Dendritic cell treated with granulocyte-macrophage colony-stimulating factor and Interleukin-4, amounts not matched to agents 40 ng/mL and 50 ng/mL, for 4 days (primary cell): ENCODE measurements at regions of chr17 and their contacts with region 1.

Region 1: DNA sequence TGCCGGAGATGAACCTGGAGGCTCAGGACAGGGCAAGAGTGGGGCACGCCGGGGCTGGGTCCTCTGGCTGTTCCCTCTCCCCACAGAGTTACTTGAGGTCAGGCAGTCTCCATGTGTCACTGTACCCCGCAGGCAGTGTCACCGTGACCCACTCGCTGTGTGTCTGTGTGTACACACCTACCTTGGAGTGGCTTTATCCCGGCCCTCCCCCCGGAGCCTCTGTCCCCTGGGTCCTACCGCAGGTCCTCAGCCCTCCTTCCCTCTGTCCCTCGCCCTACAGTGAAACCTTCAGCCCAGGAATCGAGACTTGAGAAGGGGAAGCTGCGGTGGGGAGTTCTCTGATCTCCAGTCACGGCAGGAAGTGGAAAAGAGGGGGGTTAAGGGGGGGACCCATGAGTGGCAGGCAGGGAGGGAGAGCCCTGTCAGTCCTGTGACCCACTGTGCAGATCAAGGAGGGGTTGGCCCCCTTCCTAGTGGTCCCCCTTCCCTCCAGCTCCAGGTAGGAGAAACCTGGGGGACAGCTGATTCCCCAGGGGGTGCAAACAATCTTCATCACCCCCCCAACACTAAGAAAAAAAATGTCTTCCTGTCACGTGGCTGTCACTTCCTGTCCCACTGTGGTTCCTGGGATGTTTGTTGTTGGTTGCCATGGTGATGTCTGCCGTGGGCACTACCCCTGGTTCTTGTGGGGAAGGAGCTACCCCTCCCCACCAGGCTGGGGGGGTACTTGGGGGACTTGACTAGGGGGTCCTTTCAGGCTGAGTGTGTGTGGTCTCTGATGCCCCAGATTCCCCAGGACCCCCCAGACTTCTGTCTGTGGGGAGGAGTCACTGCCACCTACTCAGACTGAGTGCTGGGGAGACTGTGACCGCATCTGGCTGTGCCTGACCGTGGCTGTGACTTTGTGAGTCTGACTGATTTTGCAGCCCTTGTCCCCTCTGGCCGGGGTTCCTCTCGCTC is 13.7 kb downstream of the RARA start:
- H3K4me3 Mint-ChIP-seq: peak overlapping the region; percentile 94
- H3K27ac Mint-ChIP-seq: peak overlapping the region; percentile 96
- H3K4me1 Mint-ChIP-seq: peaks cover 98% of the 10 kb centered on the region
- H3K27me3 Mint-ChIP-seq: no peaks in the 10 kb centered on the region

Region 2: DNA sequence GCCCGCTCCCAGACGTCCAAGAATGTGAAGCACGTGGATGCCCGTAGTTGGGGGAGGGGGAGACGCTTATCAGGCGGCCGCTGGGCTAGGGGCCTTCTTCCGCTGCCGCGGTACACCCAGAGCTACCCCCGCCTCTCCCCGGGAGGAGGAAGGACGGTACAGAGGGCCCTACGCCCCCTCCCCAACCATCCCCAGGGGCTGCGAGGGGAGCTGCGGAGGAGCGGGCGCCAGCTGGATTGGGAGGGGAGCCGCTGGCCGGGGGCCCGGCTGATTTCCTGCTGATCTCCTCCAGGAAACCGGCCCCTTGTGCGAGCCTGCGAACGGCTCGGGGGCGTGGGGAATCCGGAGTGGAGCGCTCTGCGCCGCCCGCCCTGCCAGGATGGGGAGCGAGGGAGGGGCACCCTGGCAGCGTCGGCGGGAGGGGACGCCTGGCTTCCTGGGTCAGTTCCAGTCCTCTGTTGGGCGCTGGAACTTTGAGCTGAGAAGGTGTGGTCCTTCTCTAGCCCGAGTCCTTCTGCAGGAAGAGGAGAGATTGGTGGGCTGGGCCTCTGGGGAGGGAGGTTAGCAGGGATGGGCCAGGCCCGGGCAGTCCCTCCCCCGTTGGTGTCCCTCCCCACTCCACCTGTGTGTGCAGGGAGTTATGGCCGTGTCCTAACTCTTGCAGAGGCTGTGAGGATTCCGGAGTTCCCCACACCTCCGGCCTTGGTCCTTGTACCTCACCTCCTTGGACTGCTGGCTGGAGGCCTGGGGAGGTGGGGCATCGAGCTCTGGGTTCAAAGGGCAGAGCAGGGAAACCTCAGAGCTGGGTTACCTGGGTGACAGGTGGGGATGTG is 22.7 kb after region 1 on chr17:
- intact Hi-C with region 1: loop called (anchors 2 kb)
- H3K4me3 Mint-ChIP-seq: peak overlapping the region; percentile 76
- H3K27ac Mint-ChIP-seq: peak overlapping the region; percentile 91
- H3K4me1 Mint-ChIP-seq: peaks cover 90% of the 10 kb centered on the region
- H3K27me3 Mint-ChIP-seq: no peaks in the 10 kb centered on the region